ENCODE measurements at regions of chr5 and their contacts with region 1.

Region 1: GRCh38 chr5:168301593-168302388 is 10.3 kb downstream of the WWC1 start:
- DNase-seq: peak; percentile 50

Region 2: DNA sequence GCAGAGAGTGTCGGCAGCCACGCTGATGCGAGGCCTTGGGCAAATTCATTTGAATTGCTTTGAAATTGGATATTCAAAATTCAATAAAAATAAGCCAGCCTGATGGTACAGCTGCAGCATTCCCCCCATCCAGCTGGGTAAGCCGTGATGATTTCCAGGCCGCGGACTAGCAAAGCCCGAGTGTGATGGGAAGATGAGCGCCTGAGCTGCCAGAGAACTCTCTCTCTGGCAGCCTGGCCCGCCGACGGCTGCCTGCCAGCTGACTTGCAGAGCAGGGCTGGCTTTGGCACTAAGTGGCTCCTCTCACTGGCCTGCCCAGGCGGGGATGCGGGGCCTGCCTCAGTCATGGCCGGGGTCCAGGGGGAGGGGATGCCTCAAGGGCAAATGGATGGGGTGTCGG is 278.6 kb before region 1 on chr5:
- intact Hi-C with region 1: no loop called
- DNase-seq: no peak

Region 3: GRCh38 chr5:168317521-168318147 is 15.8 kb after region 1 on chr5:
- intact Hi-C with region 1: no loop called
- DNase-seq: peak; percentile 1

Region 4: GRCh38 chr5:168365581-168366081 is 63.8 kb after region 1 on chr5:
- intact Hi-C with region 1: loop called in 1 of 2 experiments (anchors 2 kb)
- DNase-seq: no peak

Measured in posterior vena cava (tissue), 2 donors.